ENCODE measurements at regions of chr4 and their contacts with region 1.

Region 1: DNA sequence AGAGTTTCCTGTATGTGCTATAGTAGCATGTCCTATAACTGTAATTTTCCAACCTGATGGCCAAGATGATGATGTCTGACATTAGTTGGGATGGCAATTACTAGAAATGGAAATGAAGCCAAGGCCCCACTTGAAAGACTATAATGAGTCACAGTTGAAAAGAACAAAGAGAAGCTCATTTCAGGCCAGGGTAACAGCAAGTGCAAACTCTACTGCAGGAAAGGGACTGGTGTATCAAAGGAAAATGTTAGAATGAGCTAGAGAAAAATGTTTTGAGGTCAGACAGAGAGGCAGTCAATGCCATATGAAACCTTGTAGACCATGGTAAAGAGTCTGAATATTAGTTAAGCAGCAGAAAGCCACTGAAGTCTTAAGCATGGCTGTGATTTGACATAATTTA is 146.2 kb upstream of the SH3RF1 start:
- DNase-seq: no peak
- H3K4me3 ChIP-seq: no peak overlapping the region
- H3K27ac ChIP-seq: no peak overlapping the region
- H3K4me1 ChIP-seq: no peaks in the 10 kb centered on the region
- H3K27me3 ChIP-seq: no peaks in the 10 kb centered on the region
- CTCF ChIP-seq: no peak

Region 2: DNA sequence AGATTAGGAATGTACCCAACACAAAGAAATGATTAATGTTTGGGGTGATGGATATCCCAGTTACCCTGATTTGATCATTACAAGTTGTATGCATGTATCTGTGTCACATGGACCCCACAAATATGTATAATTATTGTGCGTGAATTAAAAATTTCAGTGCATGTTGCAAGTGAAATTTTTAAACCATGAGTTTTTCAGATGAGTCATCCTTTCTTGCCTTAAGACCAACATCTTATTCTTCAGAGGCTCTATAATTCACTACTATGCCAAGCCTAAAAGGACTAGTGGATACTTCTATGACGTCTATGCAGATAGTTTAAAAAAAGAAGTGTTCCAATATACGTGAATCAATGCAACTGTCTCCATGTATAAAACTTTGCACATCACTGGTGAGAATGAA is 33.3 kb before region 1 on chr4:
- intact Hi-C with region 1: loop called (anchors 2 kb)
- DNase-seq: no peak
- H3K4me3 ChIP-seq: no peak overlapping the region
- H3K27ac ChIP-seq: no peak overlapping the region
- H3K4me1 ChIP-seq: no peaks in the 10 kb centered on the region
- H3K27me3 ChIP-seq: no peaks in the 10 kb centered on the region
- CTCF ChIP-seq: no peak

Region 3: DNA sequence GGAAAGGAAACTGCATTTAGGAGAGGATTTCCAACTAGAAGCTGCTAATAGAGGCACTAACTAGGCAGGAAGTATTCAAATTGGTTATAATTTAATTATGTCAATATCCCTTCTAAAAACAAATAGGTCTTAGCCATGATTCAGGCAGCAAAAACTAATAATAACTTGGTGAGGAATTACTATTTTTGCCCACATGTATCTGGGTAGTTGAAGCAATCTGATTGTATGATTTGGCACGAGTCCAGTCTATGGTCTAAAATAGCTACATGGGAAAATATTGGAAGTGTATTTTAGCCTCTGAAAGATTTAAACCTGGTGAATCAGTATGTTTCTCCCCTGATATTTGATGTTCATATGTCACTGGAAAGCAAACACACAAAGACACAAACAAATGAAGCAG is 547.0 kb after region 1 on chr4:
- intact Hi-C with region 1: no loop called
- DNase-seq: no peak
- H3K4me3 ChIP-seq: no peak overlapping the region
- H3K27ac ChIP-seq: no peak overlapping the region
- H3K4me1 ChIP-seq: peaks cover 12% of the 10 kb centered on the region
- H3K27me3 ChIP-seq: no peaks in the 10 kb centered on the region
- CTCF ChIP-seq: no peak

Measured in left ventricle myocardium inferior (tissue), 1 donor.